ENCODE measurements at regions of chr9 and their contacts with region 1.

Region 1: DNA sequence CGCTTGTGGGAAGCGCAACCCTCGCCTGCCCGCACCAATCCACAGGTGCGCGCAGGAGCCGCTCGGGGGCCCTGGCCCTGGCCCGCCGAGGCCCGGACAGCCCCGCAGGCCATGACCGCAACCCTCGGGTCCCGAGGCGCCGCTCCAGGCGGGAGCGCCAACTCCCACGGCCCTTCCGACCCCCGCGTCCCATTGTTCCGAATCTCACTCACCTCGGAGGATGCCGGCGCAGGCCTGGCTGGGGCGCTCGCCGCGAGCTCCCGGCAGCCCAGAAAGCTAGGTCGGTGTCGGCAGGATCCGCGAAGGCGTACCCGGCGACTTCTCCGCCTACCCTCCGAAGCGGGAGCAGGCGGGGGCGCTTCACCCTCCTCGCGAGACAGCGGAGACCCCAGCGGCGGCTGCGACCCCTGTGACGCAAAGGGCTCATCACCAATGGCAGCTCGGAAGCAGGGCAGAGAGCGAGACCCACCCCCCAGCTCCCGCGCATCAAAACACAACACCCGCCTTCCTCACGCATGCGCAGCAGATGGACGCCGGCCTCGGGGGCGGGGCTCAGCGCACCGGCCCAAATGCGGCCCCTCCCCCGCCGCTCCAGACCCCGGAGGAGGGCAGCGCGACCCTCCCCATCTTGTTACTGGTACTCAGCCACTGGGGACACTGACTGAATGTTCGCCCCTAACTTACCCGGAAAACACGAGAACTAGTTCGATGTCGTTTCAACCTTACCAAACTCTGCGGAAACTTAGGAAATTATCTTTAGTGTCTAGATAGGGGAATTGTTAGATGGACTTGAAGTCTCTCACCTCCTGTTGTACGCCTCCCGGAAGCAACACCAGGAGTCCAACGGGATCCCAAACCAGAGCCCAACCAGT is 1.3 kb upstream of the SMIM27 start:
- DNase-seq: peak; percentile 91
- ATAC-seq: peak; percentile 82
- H3K4me3 ChIP-seq: peak overlapping the region; percentile 94
- H3K27ac ChIP-seq: peak overlapping the region; percentile 46
- H3K4me1 ChIP-seq: no peaks in the 10 kb centered on the region; the same call in 1 of the 2 replicates
- H3K27me3 ChIP-seq: no peaks in the 10 kb centered on the region
- CTCF ChIP-seq: peak; percentile 18; the same call in 1 of the 2 replicates
- POLR2A ChIP-seq: peak; percentile 38; the same call in 1 of the 2 replicates
- RAD21 ChIP-seq: no peak

Region 2: DNA sequence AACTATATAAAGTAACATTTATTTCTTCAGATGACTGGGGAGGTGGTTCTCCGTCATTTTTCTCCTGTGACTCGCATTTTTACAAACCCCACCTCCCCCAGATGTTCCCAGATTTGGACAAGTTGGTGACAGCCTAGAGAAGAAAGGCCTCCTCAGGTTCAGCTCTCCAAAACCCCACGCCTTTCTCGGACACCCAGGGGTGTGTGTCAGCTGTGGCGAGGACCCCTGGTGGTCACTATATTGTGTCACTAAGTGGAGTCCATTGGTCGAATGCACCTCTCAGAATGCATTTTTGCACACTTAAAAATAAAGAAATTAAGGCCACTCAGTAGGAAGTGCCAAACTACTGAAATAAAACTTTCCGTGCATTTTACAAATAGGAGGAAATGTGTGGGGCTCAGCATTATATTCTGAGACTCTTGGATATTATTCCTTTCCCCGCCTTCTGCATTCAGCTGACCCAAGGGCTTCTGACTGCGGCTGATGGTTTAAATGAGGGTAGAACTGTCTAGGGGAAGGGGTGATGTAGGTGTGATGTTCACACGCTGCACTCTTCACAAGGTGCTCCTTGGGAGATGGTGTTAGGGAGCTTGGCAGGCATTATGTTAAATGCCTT is 118.8 kb before region 1 on chr9:
- CTCF ChIA-PET with region 1: no interaction called
- POLR2A ChIA-PET with region 1: no interaction called
- dilution Hi-C with region 1: loop called (anchors 25 kb)
- in situ Hi-C with region 1: no loop called
- intact Hi-C with region 1: no loop called
- DNase-seq: peak; percentile 64
- ATAC-seq: peak; percentile 43
- H3K4me3 ChIP-seq: no peak overlapping the region
- H3K27ac ChIP-seq: peak overlapping the region; percentile 82
- H3K4me1 ChIP-seq: peaks cover 35% of the 10 kb centered on the region
- H3K27me3 ChIP-seq: no peaks in the 10 kb centered on the region
- CTCF ChIP-seq: peak; percentile 57
- POLR2A ChIP-seq: no peak
- RAD21 ChIP-seq: peak; percentile 55

Region 3: GRCh38 chr9:32526041-32526706 is 24.6 kb before region 1 on chr9 and contains the start of gene RIGI:
- CTCF ChIA-PET with region 1: interaction called, 5 read pairs
- POLR2A ChIA-PET with region 1: interaction called, 5 read pairs
- dilution Hi-C with region 1: no loop called
- in situ Hi-C with region 1: no loop called
- intact Hi-C with region 1: loop called (anchors 1 kb)
- DNase-seq: peak; percentile 93
- ATAC-seq: peak; percentile 95
- H3K4me3 ChIP-seq: peak within 1 kb of the TSS; percentile 86
- H3K27ac ChIP-seq: peak within 1 kb of the TSS; percentile 91
- H3K4me1 ChIP-seq: peaks cover 3% of the 10 kb centered on the region
- H3K27me3 ChIP-seq: no peaks in the 10 kb centered on the region
- CTCF ChIP-seq: peak; percentile 32; the same call in 1 of the 2 replicates
- POLR2A ChIP-seq: peak; percentile 78
- RAD21 ChIP-seq: peak; percentile 34; the same call in 1 of the 2 replicates
- total RNA-seq, gene RIGI: 13.6 and 18.1 TPM in 2 replicates

Region 4: DNA sequence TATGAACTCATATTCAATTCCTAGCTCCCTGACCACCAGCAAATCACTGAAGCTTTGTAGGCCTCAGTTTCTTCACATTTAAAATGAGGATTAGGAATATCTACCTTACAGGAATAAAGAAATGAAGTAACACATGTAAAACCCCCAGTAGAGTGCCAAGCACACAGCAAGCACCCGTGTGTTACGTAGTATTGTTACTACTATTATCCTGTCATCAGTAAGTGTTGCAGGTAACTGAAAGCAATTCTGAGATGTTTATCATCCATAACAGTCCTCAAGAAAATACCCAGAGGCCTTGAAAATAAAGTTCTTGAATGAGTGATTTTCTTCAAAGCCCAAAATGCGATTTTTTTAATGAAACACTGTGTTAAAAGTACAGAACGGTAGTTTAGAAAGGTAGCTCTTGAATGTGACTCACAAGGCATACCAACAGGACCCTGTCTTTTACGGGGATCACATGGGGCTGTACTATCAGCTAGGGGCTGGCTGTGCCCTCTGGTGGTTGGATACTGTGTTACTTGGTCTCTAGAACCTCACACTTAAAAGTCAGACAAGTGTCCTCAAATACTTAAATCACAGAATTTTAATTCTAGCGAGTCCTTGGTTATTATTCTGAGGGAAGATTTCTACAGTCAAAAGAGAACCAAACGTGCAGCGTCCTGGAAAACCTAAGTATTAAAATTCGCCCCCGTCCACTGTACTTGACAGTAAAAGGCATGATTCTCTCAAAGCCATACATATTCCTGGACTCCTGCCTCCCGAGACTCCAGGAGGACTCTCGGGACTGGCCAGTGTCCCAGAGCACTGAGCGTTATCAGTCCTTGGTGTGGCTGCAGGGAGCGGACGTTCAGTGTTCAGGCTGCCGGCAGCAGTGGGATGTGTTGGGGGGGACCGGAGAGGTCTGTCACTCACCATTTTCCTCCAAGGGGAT is 21.4 kb after region 1 on chr9:
- CTCF ChIA-PET with region 1: interaction called, 10 read pairs
- POLR2A ChIA-PET with region 1: no interaction called
- dilution Hi-C with region 1: no loop called
- in situ Hi-C with region 1: no loop called
- intact Hi-C with region 1: loop called (anchors 1 kb)
- DNase-seq: peak; percentile 82
- ATAC-seq: peak; percentile 81
- H3K4me3 ChIP-seq: peak overlapping the region; percentile 79
- H3K27ac ChIP-seq: peak overlapping the region; percentile 78
- H3K4me1 ChIP-seq: no peaks in the 10 kb centered on the region
- H3K27me3 ChIP-seq: no peaks in the 10 kb centered on the region
- CTCF ChIP-seq: peak; percentile 77
- POLR2A ChIP-seq: no peak
- RAD21 ChIP-seq: peak; percentile 74

Region 5: DNA sequence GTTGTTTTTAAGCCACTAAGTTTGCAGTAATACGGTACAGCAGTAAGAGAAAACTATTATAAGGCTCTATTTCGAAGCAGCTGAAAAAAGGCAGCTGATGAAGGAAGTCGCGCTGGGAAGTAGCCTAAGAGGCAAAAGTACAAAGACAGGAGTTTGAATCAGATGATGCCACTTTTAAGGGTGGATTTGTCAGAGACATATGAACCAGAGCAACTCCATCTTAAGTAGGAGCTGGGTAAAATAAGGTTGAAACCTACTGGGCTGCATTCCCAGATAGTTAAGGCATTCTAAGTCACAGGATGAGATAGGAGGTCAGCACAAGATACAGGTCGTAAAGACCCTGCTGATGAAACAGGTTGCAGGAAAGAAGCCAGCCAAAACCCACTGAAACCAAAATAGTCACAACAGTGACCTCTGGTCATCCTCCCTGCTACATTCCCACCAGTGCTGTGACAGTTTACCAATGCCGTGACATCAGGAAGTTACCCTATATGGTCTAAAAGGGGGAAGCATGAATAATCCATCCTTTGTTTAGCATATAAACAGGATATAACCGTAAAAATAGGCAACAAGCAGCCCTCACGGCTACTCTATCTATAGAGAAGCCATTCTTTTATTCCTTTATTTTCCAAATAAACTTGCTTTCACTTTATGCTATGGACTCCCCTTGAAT is 1152.8 kb after region 1 on chr9:
- CTCF ChIA-PET with region 1: no interaction called
- POLR2A ChIA-PET with region 1: interaction called, 13 read pairs
- dilution Hi-C with region 1: no loop called
- in situ Hi-C with region 1: no loop called
- intact Hi-C with region 1: no loop called
- DNase-seq: no peak
- ATAC-seq: no peak
- H3K4me3 ChIP-seq: no peak overlapping the region
- H3K27ac ChIP-seq: no peak overlapping the region
- H3K4me1 ChIP-seq: no peaks in the 10 kb centered on the region
- H3K27me3 ChIP-seq: peaks cover 8% of the 10 kb centered on the region
- CTCF ChIP-seq: no peak
- POLR2A ChIP-seq: no peak
- RAD21 ChIP-seq: no peak